HEK293T (cell line): ENCODE measurements at regions of chr1 and their contacts with region 1.

Region 1: GRCh38 chr1:30368651-30369240 is 354.6 kb downstream of the MATN1 start:
- DNase-seq: no peak

Region 2: GRCh38 chr1:30379684-30380624 is 11.2 kb after region 1 on chr1:
- CTCF ChIA-PET with region 1: interaction called, 17 read pairs
- POLR2A ChIA-PET with region 1: no interaction called
- DNase-seq: peak; percentile 92